Gastrocnemius medialis (tissue), 4 donors: ENCODE measurements at regions of chr15 and their contacts with region 1.

Region 1: DNA sequence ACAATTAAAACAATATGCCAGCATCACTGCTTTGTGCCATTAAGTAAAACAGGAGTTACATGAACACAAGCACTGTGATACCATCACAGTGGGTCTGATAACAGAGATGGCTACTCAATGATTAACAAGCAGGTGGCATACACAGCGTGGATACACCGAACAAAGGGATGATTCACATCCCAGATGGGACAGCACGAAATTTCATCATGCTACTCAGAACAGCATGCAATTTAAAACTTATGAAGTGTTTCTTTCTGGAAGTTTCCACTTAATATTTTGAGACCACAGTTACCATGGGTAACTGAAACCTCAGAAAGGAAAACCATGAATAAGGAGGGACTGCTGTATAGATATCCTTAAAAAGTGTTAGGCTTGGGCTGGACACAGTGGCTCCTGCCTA is 44.5 kb downstream of the SLC24A1 start:
- DNase-seq: no peak
- ATAC-seq: no peak
- H3K4me3 ChIP-seq: no peak overlapping the region
- H3K27ac ChIP-seq: no peak overlapping the region
- H3K4me1 ChIP-seq: no peaks in the 10 kb centered on the region
- H3K27me3 ChIP-seq: no peaks in the 10 kb centered on the region
- CTCF ChIP-seq: no peak
- POLR2A ChIP-seq: no peak

Region 2: GRCh38 chr15:65712415-65712814 is 46.2 kb after region 1 on chr15:
- in situ Hi-C with region 1: no loop called
- intact Hi-C with region 1: loop called (anchors 10 kb)
- DNase-seq: no peak
- ATAC-seq: no peak
- H3K4me3 ChIP-seq: no peak overlapping the region
- H3K27ac ChIP-seq: no peak overlapping the region
- H3K4me1 ChIP-seq: no peaks in the 10 kb centered on the region
- H3K27me3 ChIP-seq: no peaks in the 10 kb centered on the region
- CTCF ChIP-seq: no peak
- POLR2A ChIP-seq: no peak